ENCODE measurements at regions of chrX and their contacts with region 1.

Region 1: GRCh38 chrX:103533511-103534216 is 14.4 kb upstream of the RAB40A start:
- DNase-seq: peak; percentile 88
- H3K4me3 Mint-ChIP-seq: peak overlapping the region; percentile 78
- H3K27ac Mint-ChIP-seq: no peak overlapping the region
- H3K4me1 Mint-ChIP-seq: peaks cover 4% of the 10 kb centered on the region
- H3K27me3 Mint-ChIP-seq: peaks cover 5% of the 10 kb centered on the region

Region 2: DNA sequence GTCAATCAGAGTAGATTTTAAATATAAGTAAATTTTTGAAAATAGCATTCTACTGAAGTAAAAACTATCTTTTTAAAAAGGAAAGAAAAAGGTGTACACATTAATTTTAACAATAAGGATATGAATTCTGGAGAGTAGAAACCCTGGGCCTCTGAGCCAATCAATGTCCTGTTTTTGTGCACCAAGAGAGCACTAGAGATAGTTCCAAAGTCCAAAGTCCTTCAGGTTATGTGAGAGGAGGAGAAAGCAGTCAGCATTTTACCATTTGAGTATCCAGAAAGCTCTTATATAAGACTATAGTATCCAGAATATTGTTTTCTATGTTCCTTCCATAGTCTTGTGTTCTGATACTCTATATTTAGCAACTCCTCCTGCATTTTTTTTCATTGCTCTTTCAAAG is 275.4 kb before region 1 on chrX:
- intact Hi-C with region 1: no loop called
- DNase-seq: no peak
- H3K4me3 Mint-ChIP-seq: no peak overlapping the region
- H3K27ac Mint-ChIP-seq: no peak overlapping the region
- H3K4me1 Mint-ChIP-seq: peaks cover 12% of the 10 kb centered on the region
- H3K27me3 Mint-ChIP-seq: peaks cover 16% of the 10 kb centered on the region

Region 3: DNA sequence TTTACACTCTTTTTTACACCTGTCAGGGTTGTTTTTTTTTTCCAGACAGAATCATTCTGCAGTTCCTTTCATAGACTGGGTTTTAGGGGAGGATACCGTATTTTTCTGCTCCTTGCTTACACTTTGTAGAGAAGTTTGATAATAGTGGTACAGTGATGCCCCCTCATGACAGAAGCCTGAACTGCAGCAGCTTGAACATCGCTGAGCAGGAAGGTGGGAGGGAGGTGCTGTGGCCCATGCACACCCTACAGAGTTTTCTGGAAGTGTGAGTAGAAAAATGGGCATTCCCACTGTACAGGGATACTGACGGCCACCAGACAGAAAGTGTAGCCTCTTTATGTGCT is 68.9 kb before region 1 on chrX:
- intact Hi-C with region 1: no loop called
- DNase-seq: peak; percentile 92
- H3K4me3 Mint-ChIP-seq: peak overlapping the region; percentile 92
- H3K27ac Mint-ChIP-seq: no peak overlapping the region
- H3K4me1 Mint-ChIP-seq: peaks cover 8% of the 10 kb centered on the region
- H3K27me3 Mint-ChIP-seq: no peaks in the 10 kb centered on the region

Region 4: DNA sequence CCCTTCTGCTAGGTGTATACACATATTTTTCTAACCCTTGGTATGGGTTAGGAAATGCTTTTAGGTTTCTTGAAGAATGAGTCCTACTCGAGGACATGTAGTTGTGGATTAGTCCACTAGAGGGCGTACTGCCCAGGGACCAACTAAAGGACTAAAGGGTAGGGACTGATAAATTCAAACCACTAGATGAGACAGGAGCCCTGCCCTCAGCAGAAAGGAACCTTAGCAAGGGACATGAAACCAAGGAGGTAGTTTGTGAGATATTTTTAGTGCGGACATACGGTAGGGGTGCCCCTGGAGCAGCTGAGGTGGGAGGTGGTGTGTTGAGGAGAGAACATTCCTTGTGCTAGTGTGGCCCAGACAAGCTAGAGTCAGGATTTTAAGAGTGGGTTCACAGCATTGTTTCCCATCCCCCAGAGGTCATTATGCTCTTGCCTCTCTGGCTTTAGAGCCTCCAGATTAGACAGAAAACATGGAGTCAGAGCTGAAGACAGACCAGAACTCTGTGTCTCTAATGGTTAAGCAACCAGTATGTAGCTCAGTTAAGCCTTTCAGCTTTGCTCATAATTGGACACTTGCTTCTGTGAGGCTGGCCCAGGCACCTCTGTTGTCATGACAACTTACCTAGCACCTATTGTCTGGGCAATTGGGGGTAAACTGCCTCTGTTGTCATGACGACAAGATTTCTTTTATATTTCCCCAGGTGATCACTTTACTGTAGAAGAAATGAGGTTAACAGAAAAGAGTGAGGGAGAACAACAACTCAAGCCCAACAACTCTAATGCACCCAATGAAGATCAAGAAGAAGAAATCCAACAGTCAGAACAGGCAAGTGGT is 178.1 kb after region 1 on chrX:
- intact Hi-C with region 1: loop called (anchors 10 kb)
- DNase-seq: peak; percentile 84
- H3K4me3 Mint-ChIP-seq: no peak overlapping the region
- H3K27ac Mint-ChIP-seq: no peak overlapping the region
- H3K4me1 Mint-ChIP-seq: no peaks in the 10 kb centered on the region
- H3K27me3 Mint-ChIP-seq: peaks cover 4% of the 10 kb centered on the region